AG04450 (cell line): ENCODE measurements at regions of chr12 and their contacts with region 1.

Region 1: DNA sequence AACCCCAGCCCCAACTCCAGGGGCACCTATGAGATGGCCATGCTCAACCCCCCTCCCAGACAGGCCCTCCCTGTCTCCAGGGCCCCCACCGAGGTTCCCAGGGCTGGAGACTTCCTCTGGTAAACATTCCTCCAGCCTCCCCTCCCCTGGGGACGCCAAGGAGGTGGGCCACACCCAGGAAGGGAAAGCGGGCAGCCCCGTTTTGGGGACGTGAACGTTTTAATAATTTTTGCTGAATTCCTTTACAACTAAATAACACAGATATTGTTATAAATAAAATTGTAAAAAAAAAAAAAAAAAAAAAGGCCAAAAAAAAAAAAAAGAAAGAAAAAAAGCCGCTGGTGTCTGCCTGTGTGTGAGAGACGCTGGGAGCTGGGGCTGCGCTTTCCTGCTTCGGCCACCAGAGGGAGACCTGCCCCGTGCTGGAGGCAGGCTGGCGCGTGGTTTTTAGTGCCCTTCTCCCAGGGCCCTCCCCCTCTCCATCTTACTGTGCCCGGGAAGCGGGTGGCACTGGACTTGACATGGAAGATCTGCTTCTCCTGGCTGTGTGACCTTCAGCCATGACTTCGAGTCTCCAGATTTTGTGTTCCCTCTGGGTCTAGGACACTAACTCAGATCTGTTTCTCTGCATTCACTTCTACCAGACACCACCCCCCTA is 3.4 kb upstream of the NXPH4 start:
- DNase-seq: peak; percentile 65
- H3K4me3 ChIP-seq: no peak overlapping the region
- H3K27ac ChIP-seq: peak overlapping the region; percentile 11
- H3K27me3 ChIP-seq: peaks cover 28% of the 10 kb centered on the region
- CTCF ChIP-seq: peak; percentile 96

Region 2: GRCh38 chr12:57229634-57230380 is 16.6 kb after region 1 on chr12 and contains the start of gene SHMT2:
- CTCF ChIA-PET with region 1: interaction called, 45 read pairs
- POLR2A ChIA-PET with region 1: interaction called, 24 read pairs
- DNase-seq: peak; percentile 92
- H3K4me3 ChIP-seq: peak within 1 kb of the TSS; percentile 87
- H3K27ac ChIP-seq: peak within 1 kb of the TSS; percentile 99
- H3K27me3 ChIP-seq: no peaks in the 10 kb centered on the region
- CTCF ChIP-seq: no peak
- polyA plus RNA-seq, gene SHMT2: 266 and 314 TPM in 2 replicates

Region 3: GRCh38 chr12:57248934-57249742 is 36.0 kb after region 1 on chr12:
- CTCF ChIA-PET with region 1: interaction called, 161 read pairs
- POLR2A ChIA-PET with region 1: no interaction called
- DNase-seq: no peak
- H3K4me3 ChIP-seq: no peak overlapping the region
- H3K27ac ChIP-seq: no peak overlapping the region
- H3K27me3 ChIP-seq: no peaks in the 10 kb centered on the region
- CTCF ChIP-seq: no peak